ENCODE measurements at regions of chr16 and their contacts with region 1.

Region 1: DNA sequence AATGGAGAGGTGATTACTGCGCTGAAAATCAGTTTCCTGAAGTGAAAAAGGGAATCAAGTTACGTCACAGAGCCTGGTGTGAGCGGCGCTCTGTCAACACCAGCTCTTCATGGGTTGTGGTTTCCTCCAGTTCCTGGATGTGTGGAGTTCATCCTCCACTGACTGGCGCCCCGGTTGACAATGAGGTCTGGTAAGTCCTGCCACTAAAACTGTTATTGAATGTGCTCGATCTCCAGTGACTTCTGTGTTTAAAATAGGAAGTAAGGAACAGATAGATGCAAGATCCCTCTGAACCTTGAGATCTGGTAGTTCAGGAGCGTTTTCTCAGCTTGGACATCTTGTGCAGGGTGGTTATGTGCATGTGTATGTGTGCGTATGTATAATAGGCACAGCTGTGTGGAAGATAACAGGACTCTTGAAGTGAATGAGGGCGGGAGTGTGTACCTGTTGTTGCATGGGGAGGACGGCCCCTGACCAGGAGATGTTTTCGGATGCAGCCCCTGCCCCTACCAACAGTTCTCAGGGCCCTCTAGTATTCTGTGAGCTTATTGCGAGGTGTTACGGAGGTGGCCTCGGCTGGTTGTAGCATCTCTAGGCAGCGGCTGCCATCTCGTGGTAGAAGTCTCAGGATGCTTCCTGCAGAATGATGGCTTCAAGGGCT is 22.0 kb upstream of the GOT2 start:
- DNase-seq: peak; percentile 77
- H3K4me3 ChIP-seq: no peak overlapping the region
- H3K27ac ChIP-seq: no peak overlapping the region
- H3K4me1 ChIP-seq: no peaks in the 10 kb centered on the region
- H3K27me3 ChIP-seq: no peaks in the 10 kb centered on the region
- CTCF ChIP-seq: peak in 3 of 4 experiments; percentile 64 to 75 (median 73)
- POLR2A ChIP-seq: no peak

Region 2: DNA sequence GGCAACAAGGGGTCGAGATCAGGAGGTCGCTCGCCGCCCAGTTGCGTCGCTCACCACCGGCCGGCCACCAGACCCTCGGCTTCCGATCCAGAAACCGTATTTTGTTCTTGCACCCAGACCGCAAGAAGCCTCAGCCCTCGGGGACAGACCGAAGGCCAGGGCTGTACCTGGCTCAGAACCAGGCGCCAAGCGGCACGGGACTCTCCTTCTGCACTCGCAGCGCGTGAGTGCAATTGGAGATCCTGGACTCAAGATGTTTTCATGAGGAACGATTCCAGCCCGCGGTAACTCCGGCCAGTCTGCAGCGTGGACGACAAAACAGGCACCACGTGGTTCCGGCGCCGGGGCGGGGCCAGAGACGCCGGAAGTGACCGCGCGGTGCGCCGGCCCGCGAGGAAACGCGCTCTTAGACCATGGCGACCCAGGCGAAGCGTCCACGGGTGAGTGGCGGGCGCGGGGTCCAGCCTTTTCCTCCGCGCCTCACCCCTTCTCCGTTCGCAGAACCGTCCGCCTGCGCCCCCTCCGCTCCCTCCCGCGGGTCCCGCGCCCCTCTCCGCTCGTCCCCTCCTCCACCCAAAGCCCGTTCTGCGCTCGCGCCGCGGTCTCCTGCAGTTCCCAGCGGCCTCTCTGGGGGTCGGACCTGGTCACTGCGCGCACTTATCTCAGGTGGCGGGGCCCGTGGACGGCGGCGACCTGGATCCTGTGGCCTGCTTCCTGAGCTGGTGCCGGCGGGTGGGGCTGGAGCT is 240.8 kb before region 1 on chr16 and contains the start of gene SETD6:
- intact Hi-C with region 1: loop called (anchors 10 kb)
- DNase-seq: peak; percentile 88
- H3K4me3 ChIP-seq: peak within 1 kb of the TSS; percentile 59 to 84
- H3K27ac ChIP-seq: peak within 1 kb of the TSS; percentile 74 to 75
- H3K4me1 ChIP-seq: peaks cover 6% of the 10 kb centered on the region
- H3K27me3 ChIP-seq: no peaks in the 10 kb centered on the region
- CTCF ChIP-seq: peak in 2 of 4 experiments; percentile 14 to 37
- POLR2A ChIP-seq: peak; percentile 13
- total RNA-seq, gene SETD6: 45.4 to 55.8 TPM

Region 3: DNA sequence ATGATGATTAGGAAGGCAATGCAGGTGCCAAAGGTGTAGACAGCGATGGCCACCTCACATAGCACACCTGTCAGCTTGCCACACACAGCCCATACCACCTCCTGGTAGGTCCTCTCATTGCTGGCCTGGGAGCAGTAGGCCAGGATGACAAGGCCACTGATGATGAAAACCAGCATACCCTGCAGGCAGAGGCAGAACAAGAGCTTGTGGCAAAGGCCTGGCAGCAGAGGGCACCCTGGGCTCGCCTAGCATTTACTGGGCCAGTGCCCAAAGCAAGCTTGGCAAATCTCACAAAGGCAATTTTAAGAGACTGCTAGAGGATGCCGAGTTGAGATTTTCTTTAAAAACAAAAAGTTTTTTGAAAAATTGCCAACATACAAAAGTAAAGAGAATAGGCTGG is 77.4 kb before region 1 on chr16:
- intact Hi-C with region 1: loop called (anchors 5 kb)
- DNase-seq: peak; percentile 66
- H3K4me3 ChIP-seq: no peak overlapping the region
- H3K27ac ChIP-seq: no peak overlapping the region
- H3K4me1 ChIP-seq: no peaks in the 10 kb centered on the region
- H3K27me3 ChIP-seq: no peaks in the 10 kb centered on the region
- CTCF ChIP-seq: peak in 3 of 4 experiments; percentile 53 to 71 (median 56)
- POLR2A ChIP-seq: no peak